ENCODE measurements at regions of chr10 and their contacts with region 1.

Region 1: DNA sequence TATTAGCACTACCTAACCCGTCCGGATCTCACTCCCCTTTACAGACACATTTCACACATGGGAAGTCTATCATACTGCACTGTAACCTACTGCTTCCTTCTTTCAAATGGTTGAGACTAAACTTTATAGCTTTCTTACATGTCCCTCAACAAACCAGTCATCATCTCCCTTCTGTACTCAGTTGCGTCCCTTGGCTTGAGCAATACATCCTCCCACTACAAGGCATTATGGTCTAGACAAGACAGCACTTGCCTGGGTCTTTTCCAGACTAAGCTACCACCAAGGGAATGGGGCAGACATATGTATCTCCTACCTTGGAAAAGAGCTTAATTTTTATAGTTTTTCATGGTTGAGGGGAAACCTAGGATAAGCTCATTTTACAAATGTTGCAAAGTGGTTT is 575.2 kb downstream of the KCNMA1 start:
- DNase-seq: no peak
- ATAC-seq: no peak
- H3K4me3 ChIP-seq: no peak overlapping the region
- H3K27ac ChIP-seq: no peak overlapping the region
- H3K4me1 ChIP-seq: peaks cover 12% of the 10 kb centered on the region
- H3K27me3 ChIP-seq: no peaks in the 10 kb centered on the region
- CTCF ChIP-seq: no peak

Region 2: GRCh38 chr10:76998451-76998850 is 63.9 kb before region 1 on chr10:
- CTCF ChIA-PET with region 1: no interaction called
- POLR2A ChIA-PET with region 1: no interaction called
- intact Hi-C with region 1: no loop called
- DNase-seq: no peak
- ATAC-seq: no peak
- H3K4me3 ChIP-seq: no peak overlapping the region
- H3K27ac ChIP-seq: no peak overlapping the region
- H3K4me1 ChIP-seq: no peaks in the 10 kb centered on the region
- H3K27me3 ChIP-seq: no peaks in the 10 kb centered on the region
- CTCF ChIP-seq: no peak

Region 3: GRCh38 chr10:77049896-77050295 is 12.5 kb before region 1 on chr10:
- CTCF ChIA-PET with region 1: no interaction called
- POLR2A ChIA-PET with region 1: no interaction called
- intact Hi-C with region 1: loop called (anchors 1 kb)
- DNase-seq: peak; percentile 50
- ATAC-seq: no peak; the same call in 1 of the 2 replicates
- H3K4me3 ChIP-seq: no peak overlapping the region
- H3K27ac ChIP-seq: no peak overlapping the region
- H3K4me1 ChIP-seq: no peaks in the 10 kb centered on the region
- H3K27me3 ChIP-seq: no peaks in the 10 kb centered on the region
- CTCF ChIP-seq: no peak

Region 4: GRCh38 chr10:77084431-77085144 is 22.2 kb after region 1 on chr10:
- CTCF ChIA-PET with region 1: no interaction called
- POLR2A ChIA-PET with region 1: no interaction called
- intact Hi-C with region 1: no loop called
- DNase-seq: no peak
- ATAC-seq: no peak
- H3K4me3 ChIP-seq: no peak overlapping the region
- H3K27ac ChIP-seq: no peak overlapping the region
- H3K4me1 ChIP-seq: 0 out of 2 replicates have a peak, but pooled peaks cover 7% of the 10 kb centered on the region
- H3K27me3 ChIP-seq: no peaks in the 10 kb centered on the region
- CTCF ChIP-seq: no peak

Region 5: GRCh38 chr10:77179015-77179695 is 116.8 kb after region 1 on chr10:
- CTCF ChIA-PET with region 1: no interaction called
- POLR2A ChIA-PET with region 1: no interaction called
- intact Hi-C with region 1: no loop called
- DNase-seq: peak; percentile 100
- ATAC-seq: peak; percentile 94
- H3K4me3 ChIP-seq: no peak overlapping the region
- H3K27ac ChIP-seq: peak overlapping the region; percentile 48
- H3K4me1 ChIP-seq: peaks cover 36% of the 10 kb centered on the region
- H3K27me3 ChIP-seq: no peaks in the 10 kb centered on the region
- CTCF ChIP-seq: no peak

Region 6: GRCh38 chr10:77667426-77668324 is 605.3 kb after region 1 on chr10:
- CTCF ChIA-PET with region 1: no interaction called
- POLR2A ChIA-PET with region 1: no interaction called
- intact Hi-C with region 1: no loop called
- DNase-seq: no peak
- ATAC-seq: no peak
- H3K4me3 ChIP-seq: no peak overlapping the region
- H3K27ac ChIP-seq: no peak overlapping the region
- H3K4me1 ChIP-seq: no peaks in the 10 kb centered on the region
- H3K27me3 ChIP-seq: peaks cover 16% of the 10 kb centered on the region; the same call in 1 of the 2 replicates
- CTCF ChIP-seq: no peak